Spleen (tissue), 13 donors: ENCODE measurements at regions of chr15 and their contacts with region 1.

Region 1: DNA sequence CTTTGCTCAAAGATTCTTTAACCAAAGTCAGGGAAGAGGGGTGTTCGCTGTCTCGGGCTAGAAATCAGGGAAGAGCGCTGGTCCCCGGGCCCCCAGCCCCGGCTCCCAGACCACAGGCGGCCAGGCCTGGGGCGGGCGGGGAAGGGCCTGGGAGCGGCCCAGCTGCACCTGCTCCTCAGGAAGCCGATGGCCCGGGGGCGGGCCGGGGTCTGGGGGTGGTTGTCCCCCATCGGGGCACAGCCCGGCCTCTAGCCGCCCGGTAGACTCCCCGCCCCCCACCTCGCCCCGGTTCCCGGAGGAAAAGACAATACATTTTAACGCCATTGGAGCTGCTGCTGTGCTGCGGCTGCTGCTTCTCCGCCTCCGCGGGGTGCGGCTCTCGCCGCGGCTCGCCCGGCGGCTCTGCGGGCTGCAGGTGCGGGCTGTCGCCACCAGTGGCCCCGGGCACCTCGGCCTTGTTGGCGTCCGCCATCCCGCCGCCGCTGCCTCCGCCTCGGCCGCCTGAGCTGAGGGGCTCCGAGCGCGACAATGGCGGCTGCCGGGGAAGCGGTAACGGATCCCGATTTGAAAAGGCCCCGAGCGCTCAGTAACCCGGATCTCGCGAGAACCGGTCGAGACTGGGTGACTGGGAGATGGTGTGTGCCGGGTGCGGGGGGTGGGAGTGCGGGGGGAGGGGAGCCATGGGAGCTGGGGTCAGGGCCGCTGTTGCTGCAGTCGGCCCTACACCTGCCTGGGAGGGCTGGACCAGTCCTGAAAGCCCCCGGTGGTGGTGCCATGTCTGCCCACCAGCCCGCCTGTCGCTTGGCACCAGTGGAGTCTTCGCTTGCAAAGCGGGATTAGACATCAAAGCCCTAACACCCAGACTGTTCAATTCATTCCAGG is at the start of gene MYEF2:
- DNase-seq: peak; percentile 88
- H3K4me3 ChIP-seq: peak within 1 kb of the TSS; percentile 54 to 82 (median 64)
- H3K27ac ChIP-seq: peak within 1 kb of the TSS; percentile 71 to 90 (median 82)
- H3K4me1 ChIP-seq: peaks cover 0 to 25% (median 13%) of the 10 kb centered on the region in 6 donors
- H3K27me3 ChIP-seq: peaks cover 0 to 29% (median 11%) of the 10 kb centered on the region in 7 donors
- CTCF ChIP-seq: peak in 1 of 11 experiments; percentile 22
- POLR2A ChIP-seq: no peak
- total RNA-seq, gene MYEF2: 13.6 to 41.3 (median 27.5) TPM

Region 2: GRCh38 chr15:48153526-48153925 is 24.5 kb before region 1 on chr15:
- intact Hi-C with region 1: loop called (anchors 2 kb)
- DNase-seq: no peak
- H3K4me3 ChIP-seq: no peak overlapping the region
- H3K27ac ChIP-seq: no peak overlapping the region
- H3K4me1 ChIP-seq: no peaks in the 10 kb centered on the region
- H3K27me3 ChIP-seq: no peaks in the 10 kb centered on the region
- CTCF ChIP-seq: no peak
- POLR2A ChIP-seq: no peak